ENCODE measurements at regions of chr10 and their contacts with region 1.

Region 1: DNA sequence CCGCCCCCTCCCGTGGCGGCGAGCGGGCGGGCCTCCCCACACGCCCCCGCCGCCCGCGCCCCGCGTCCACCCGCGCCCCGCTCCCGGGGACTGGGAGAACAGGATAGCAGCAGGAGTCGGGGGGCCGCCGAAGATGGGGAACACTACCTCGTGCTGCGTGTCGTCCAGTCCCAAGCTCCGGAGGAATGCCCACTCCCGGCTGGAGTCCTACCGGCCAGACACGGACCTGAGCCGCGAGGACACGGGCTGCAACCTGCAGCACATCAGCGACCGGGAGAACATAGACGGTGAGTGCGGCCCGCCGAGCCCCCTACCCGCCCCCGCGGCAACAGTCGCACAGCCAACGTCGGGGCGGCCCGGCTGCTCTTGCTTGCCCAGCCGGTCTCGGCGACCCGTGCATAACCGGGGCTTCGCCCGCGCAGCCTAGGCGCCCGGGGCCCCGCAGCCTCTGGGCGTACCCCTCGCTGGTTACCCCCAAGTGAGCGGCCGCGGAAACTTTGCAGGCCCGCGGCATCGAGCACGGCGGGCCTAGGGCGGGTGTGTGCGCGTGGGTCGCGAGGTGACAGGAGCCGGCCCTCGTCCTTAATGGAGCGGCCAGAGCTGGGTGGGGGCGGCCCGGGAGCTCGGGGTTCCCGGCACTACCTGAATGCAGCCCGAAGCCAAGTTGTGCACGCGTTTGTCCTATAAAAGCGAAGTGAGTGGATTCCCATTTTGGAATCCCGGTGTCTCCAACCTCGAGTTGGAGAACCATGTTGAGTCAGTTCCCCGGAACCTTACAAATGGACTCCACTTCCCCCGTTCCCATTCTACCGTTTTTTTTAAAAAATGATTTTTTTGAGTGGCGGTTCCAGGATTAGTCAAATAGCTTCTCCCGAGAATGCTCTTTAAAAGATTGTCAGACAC is 863 bp downstream of the CCNY start:
- DNase-seq: peak; percentile 79
- H3K4me3 Mint-ChIP-seq: peak overlapping the region; percentile 87
- H3K27ac Mint-ChIP-seq: peak overlapping the region; percentile 87
- H3K4me1 Mint-ChIP-seq: peaks cover 55% of the 10 kb centered on the region
- H3K27me3 Mint-ChIP-seq: no peaks in the 10 kb centered on the region

Region 2: DNA sequence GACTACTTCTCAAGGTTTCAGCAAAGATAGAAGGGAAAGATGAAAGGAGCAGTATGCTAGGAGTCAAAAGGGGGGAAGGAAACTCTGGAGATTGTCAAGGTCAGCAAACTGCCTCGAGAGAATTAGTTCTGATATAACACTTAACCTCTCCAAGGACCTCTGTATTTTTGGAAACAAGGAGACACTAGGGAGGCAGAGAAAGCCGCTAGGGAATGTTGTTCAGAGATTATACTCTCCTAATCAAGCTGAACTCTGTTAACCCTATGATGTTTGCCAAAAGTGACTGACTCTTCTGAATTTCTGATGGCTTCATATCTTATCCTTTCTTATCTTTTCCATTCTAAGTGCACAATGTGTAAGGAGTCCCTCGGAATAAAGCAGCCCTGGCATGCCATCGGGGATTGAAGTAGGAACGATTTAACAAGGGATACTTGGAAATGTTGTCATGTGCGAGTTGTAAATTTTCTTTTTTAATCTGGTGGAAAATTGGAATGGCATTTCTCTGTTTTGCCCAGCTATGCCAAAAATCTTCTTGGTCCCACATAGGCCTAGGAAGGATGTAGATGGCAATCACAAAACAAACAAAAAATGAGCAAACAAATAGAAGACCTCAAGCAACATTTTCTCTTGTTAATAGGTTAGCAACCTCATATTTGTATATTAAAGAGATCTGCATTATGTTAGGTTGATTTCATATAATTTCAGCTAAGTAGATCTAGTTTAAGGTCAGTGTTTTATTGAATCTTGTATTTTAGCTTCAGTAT is 183.3 kb before region 1 on chr10:
- intact Hi-C with region 1: loop called (anchors 5 kb)
- DNase-seq: no peak
- H3K4me3 Mint-ChIP-seq: no peak overlapping the region
- H3K27ac Mint-ChIP-seq: no peak overlapping the region
- H3K4me1 Mint-ChIP-seq: peaks cover 37% of the 10 kb centered on the region
- H3K27me3 Mint-ChIP-seq: no peaks in the 10 kb centered on the region

Region 3: DNA sequence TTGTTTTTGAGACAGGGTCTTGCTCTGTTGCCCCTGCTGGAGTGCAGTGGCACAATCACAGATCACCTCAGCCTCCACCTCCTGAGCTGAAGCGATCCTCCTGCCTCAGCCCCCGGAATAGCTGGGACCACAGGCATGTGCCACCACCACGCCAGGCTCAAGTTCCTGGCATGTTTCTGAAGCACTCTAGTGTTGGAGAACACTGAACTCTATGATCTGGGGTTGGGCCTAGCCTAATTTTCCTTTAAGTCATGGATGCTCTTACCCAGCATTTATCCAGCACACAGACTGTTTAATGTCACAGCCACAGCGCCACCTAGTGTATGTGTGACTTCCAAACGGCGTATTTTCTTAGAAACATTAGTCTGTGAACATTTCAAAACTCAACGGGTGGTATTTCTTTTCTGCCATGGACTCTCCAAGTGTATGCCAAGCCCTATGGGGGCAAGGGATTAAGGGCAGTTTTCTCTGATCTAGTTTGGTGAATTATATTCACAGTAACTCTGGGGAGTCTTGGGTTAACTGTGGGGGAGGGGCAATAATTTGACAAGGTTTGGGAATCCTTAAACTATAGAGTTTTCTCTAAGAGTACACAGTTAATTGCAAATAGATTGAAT is 118.7 kb before region 1 on chr10:
- intact Hi-C with region 1: loop called (anchors 1 kb)
- DNase-seq: peak; percentile 95
- H3K4me3 Mint-ChIP-seq: peak overlapping the region; percentile 77
- H3K27ac Mint-ChIP-seq: peak overlapping the region; percentile 97
- H3K4me1 Mint-ChIP-seq: peaks cover 55% of the 10 kb centered on the region
- H3K27me3 Mint-ChIP-seq: no peaks in the 10 kb centered on the region

Region 4: DNA sequence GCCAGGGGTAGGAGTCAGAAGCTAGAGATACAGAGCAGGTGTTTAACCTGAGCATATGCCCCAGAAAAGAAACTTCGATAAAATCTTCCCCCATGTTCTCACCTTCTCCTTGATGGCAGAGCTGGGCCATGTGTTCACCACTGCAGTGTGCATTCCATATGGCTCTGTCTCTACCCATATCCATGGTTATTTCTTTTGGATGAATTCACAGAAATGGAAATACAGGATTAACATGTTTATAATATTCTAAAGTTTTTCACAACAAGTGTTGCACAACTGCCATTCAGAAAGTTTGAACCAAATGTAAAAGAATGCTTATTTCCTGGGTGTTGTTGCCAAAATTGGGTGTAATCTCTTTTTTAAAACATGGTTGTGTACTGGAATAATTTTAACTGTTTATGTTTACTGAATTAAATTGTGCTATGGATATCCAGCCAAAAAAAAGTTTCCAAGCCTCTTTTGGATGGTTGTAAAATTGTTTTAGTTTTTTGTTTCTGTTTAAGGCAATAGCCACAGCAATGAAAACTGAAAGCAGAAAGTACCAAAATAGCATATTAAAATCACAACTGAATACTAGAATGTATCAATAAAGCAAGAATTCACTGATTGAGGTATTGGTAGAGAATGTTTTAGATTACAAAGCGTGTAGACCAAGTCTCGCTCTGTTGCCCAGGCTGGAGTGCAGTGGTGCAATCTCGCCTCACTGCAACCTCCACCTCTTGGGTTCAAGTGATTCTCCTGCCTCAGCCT is 20.8 kb before region 1 on chr10:
- intact Hi-C with region 1: no loop called
- DNase-seq: no peak
- H3K4me3 Mint-ChIP-seq: no peak overlapping the region
- H3K27ac Mint-ChIP-seq: no peak overlapping the region
- H3K4me1 Mint-ChIP-seq: no peaks in the 10 kb centered on the region
- H3K27me3 Mint-ChIP-seq: no peaks in the 10 kb centered on the region

Region 5: DNA sequence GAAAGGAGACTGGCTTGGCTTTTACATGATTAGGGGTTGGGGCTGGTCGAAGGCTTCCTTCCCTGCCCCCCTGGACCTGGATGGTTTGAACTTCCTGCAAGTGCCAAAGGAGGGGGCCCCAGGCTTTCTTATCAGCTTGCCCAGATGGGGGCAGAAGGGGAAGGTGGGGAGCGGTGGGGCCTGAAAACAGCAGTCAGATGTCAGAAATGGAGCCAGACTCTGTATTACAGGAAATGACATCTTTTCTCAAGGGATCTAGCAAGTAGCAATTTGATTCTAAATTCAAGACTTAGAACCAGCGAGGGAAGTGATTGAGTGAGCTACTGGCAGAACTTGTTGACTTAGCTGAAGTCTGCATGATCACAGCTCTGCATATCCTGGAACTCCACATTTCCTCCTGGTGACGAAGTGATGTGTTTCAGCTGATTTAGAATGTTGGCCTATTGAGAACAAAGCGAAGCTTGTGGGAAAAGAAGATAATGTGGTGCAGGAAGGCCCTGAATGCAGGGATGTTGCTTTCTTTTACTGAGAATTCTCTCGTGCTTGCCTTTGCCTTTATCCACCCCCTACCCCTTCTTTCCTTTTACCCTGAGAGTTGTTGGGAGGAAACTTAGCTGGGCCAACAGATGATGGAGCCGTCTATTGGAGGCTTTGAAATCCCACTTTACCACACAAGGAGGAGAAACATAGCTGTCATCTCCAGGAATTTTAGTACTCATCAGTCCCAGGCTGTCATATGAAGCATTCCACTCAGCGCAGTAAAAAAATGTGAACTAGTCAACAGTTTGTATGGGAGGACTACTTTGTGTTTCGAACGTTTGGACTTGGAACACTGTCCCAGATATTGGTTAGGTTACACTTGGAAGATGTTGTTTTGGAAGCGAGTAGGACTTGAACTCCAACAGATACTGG is 42.3 kb after region 1 on chr10:
- intact Hi-C with region 1: loop called (anchors 5 kb)
- DNase-seq: peak; percentile 59
- H3K4me3 Mint-ChIP-seq: peak overlapping the region; percentile 14
- H3K27ac Mint-ChIP-seq: peak overlapping the region; percentile 14
- H3K4me1 Mint-ChIP-seq: peaks cover 36% of the 10 kb centered on the region
- H3K27me3 Mint-ChIP-seq: no peaks in the 10 kb centered on the region

Region 6: DNA sequence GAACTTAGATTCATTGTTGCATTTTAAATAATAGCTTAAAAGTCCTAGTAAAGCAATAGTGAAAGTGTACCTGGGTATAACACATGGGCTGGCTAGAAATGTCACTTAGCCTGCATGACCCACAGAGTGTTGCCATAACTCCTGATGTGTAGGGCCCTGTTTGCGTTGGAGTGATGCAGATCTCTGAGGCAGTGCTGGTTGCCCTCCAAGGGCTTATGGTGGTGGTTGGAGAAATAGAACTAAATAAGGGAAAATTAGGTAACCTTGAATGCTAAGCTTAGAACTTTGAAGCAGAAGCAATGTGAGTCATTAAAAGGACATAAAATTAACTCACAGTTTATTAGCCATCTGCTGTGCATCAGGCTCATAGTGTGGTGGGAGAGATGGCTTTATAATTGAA is 104.9 kb after region 1 on chr10:
- intact Hi-C with region 1: loop called (anchors 1 kb)
- DNase-seq: no peak
- H3K4me3 Mint-ChIP-seq: no peak overlapping the region
- H3K27ac Mint-ChIP-seq: peak overlapping the region; percentile 80
- H3K4me1 Mint-ChIP-seq: peaks cover 33% of the 10 kb centered on the region
- H3K27me3 Mint-ChIP-seq: no peaks in the 10 kb centered on the region

Measured in activated CD4-positive, alpha-beta T cell treated with anti-CD3 and anti-CD28 coated beads, Interleukin-2, amount 10 ng/mL, durations not matched to agents 24 days and 14 days (primary cell).